ENCODE measurements at regions of chr12 and their contacts with region 1.

Region 1: GRCh38 chr12:47377414-47378221 is 297.9 kb upstream of the AMIGO2 start:
- DNase-seq: peak; percentile 99
- H3K4me3 ChIP-seq: peak overlapping the region in 1 of 4 donors; percentile 1
- H3K27ac ChIP-seq: peak overlapping the region; percentile 70 to 89 (median 76)
- H3K4me1 ChIP-seq: peaks cover 0 to 27% (median 16%) of the 10 kb centered on the region in 4 donors
- H3K27me3 ChIP-seq: no peaks in the 10 kb centered on the region
- CTCF ChIP-seq: no peak
- EP300 ChIP-seq: peak; percentile 94 to 98 (median 98)
- POLR2A ChIP-seq: no peak

Region 2: DNA sequence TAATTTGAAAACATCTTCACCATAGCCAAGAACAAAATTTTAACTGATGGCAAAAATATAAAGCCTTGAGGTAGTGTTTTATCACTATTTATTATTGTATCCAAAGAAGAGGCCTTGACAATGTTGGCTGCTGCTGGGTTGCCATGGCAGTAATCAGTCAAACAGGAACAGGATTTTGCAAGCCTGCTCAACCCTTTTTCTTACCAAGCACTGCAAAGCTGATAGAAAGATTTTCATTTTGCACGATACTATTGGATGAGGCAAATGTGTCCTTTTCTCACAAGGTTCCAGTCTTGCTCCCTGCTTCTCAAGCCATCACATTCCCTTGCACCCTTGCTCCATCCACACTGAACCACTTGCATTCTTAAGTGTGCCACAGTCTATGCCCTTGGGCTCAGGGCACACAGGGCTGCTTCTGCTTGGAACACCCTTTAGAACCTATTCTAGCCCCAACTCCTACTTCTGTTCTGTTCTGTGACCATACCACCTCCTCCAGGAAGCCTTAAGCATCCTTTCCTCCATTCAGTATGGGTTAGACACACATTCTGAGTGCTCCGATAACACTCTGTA is 221.4 kb before region 1 on chr12:
- intact Hi-C with region 1: no loop called
- DNase-seq: no peak
- H3K4me3 ChIP-seq: no peak overlapping the region
- H3K27ac ChIP-seq: peak overlapping the region in 3 of 4 donors; percentile 10 to 67 (median 59)
- H3K4me1 ChIP-seq: peaks cover 0 to 19% (median 10%) of the 10 kb centered on the region in 4 donors
- H3K27me3 ChIP-seq: no peaks in the 10 kb centered on the region
- CTCF ChIP-seq: no peak
- EP300 ChIP-seq: no peak
- POLR2A ChIP-seq: no peak

Region 3: GRCh38 chr12:47551426-47551851 is 173.8 kb after region 1 on chr12:
- intact Hi-C with region 1: loop called (anchors 5 kb)
- DNase-seq: no peak
- H3K4me3 ChIP-seq: no peak overlapping the region
- H3K27ac ChIP-seq: peak overlapping the region in 3 of 4 donors; percentile 77 to 86 (median 84)
- H3K4me1 ChIP-seq: peaks cover 0 to 55% (median 39%) of the 10 kb centered on the region in 4 donors
- H3K27me3 ChIP-seq: no peaks in the 10 kb centered on the region
- CTCF ChIP-seq: no peak
- EP300 ChIP-seq: peak; percentile 36 to 93 (median 82)
- POLR2A ChIP-seq: no peak